ENCODE measurements at regions of chr1 and their contacts with region 1.

Region 1: DNA sequence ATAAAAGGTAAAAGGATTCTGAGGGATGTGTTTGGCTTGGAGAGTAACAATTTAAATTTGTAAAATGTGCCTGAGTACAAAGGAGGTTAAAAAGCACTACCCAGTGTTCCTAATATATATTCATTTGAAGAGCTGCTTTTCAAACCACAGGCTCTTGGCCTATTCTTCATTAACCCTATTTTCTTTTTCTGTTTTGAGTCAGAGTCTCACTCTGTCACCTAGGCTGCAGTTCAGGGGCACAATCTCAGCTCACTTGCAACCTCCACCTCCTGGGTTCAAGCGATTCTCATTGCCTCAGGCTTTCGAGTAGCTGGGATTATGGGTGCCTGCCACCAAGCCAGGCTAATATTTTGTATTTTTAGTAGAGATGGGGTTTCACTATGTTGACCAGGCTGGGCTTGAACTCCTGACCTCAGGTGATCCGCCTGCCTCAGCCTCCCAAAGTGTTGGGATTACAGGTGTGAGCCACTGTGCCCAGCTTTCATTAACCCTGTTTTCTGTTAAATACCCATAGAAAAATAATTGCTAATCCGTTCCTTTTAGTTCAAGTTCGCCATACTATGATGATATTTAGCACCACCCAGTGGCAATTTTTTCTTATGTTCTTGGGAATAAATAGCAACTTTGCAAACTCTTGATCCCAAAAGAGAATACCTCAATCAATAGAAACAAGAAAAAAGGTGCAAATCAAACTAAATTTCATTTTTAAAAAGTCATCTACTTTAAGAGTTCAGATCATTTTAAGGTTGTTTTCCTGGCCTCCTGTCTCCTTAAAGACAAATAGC is 30.5 kb downstream of the ZBTB8OS start:
- DNase-seq: no peak
- H3K4me3 Mint-ChIP-seq: no peak overlapping the region
- H3K27ac Mint-ChIP-seq: no peak overlapping the region
- H3K4me1 Mint-ChIP-seq: peaks cover 27% of the 10 kb centered on the region
- H3K27me3 Mint-ChIP-seq: no peaks in the 10 kb centered on the region

Region 2: GRCh38 chr1:31672986-31673385 is 946.9 kb before region 1 on chr1:
- intact Hi-C with region 1: no loop called
- DNase-seq: no peak
- H3K4me3 Mint-ChIP-seq: no peak overlapping the region
- H3K27ac Mint-ChIP-seq: no peak overlapping the region
- H3K4me1 Mint-ChIP-seq: peaks cover 4% of the 10 kb centered on the region
- H3K27me3 Mint-ChIP-seq: peaks cover 24% of the 10 kb centered on the region

Region 3: GRCh38 chr1:32650752-32651460 is 31.0 kb after region 1 on chr1 and contains the start of gene RBBP4:
- intact Hi-C with region 1: loop called (anchors 1 kb)
- DNase-seq: peak; percentile 100
- H3K4me3 Mint-ChIP-seq: peak within 1 kb of the TSS; percentile 99
- H3K27ac Mint-ChIP-seq: peak within 1 kb of the TSS; percentile 100
- H3K4me1 Mint-ChIP-seq: peaks cover 37% of the 10 kb centered on the region
- H3K27me3 Mint-ChIP-seq: no peaks in the 10 kb centered on the region
- total RNA-seq, gene RBBP4: 329 and 331 TPM in 2 replicates

Measured in activated CD4-positive, alpha-beta T cell treated with anti-CD3 and anti-CD28 coated beads, Interleukin-2, amount 10 ng/mL, durations not matched to agents 24 days and 14 days (primary cell).